Tibial artery (tissue), 4 donors: ENCODE measurements at regions of chr1 and their contacts with region 1.

Region 1: DNA sequence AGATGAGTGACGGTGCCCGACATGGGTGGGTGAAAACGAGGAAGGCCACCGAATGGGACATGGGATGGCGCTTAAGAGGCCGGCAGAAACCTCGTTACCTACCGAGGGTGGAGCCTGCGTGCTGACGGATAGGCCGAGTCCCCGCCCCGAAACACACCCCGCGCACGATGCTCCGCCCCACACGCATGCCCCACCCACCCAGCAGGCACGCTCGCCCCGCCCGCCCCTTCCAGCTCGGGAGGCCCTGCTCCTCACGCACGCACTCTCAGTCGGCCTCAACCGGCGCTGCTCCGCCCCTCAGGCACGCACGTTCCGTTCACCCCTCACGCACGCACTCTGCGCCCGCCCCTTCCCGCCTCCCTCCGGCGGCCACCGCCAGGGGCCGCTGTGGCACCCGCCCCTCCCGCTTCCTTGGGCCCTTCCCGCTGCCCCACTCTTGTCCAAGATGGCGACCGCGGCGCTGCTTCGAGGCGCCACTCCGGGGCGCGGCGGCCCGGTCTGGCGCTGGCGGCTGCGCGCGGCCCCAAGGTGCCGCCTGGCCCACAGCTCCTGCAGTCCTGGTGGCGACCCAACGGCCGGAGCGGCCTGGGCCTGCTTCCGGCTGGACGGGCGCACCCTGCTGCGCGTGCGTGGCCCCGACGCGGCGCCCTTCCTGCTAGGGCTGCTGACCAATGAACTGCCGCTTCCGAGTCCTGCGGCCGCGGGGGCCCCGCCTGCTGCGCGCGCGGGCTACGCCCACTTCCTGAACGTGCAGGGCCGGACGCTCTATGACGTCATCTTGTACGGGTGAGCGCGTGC is at the start of gene IBA57:
- DNase-seq: peak; percentile 99 to 100
- H3K4me3 ChIP-seq: peak within 1 kb of the TSS; percentile 70 to 86
- H3K27ac ChIP-seq: peak within 1 kb of the TSS; percentile 91 to 99
- H3K4me1 ChIP-seq: peaks cover 0 to 21% (median 11%) of the 10 kb centered on the region in 4 donors
- H3K27me3 ChIP-seq: peaks cover 0 to 20% of the 10 kb centered on the region in 2 donors
- CTCF ChIP-seq: peak; percentile 92 to 95

Region 2: DNA sequence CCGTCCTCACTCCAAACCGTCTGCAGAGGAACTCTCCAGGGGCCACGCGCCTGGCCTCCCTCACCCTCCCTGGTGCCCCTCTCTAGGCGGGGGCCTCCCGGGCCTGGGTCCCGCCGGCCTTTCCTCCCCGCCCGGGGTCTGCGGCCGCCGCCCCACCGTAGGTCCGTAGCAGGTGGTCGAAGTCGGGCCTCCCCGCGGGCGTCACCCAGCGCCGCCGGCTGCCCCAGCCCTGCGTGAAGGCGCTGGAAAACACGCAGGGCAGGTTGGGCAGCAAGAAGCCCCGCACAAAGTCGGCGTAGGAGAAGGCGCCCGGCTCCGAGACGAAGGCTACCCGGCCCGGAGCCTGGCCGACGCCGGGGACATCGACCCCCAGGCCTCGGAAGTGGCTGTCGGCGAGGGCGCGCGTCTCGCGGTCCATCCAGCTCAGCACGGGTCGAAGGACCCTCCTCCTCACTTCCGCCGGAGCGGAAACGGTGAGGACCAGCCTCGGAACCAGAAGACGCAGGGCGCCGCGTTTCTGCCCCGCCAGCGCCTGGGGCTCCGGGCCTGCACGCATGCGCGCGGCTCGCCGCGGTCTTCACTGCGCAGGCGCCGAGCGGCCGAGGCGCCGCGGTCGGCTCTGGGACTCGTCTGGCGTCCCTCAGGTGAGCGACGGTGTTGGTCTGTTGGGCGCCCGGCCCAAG is 430.6 kb before region 1 on chr1 and contains the starts of genes JMJD4 and SNAP47:
- intact Hi-C with region 1: loop called (anchors 10 kb)
- DNase-seq: peak; percentile 89 to 94
- H3K4me3 ChIP-seq: peak within 1 kb of the TSS; percentile 80 to 83
- H3K27ac ChIP-seq: peak within 1 kb of the TSS; percentile 87 to 88
- H3K4me1 ChIP-seq: peaks cover 0 to 42% (median 34%) of the 10 kb centered on the region in 4 donors
- H3K27me3 ChIP-seq: no peaks in the 10 kb centered on the region
- CTCF ChIP-seq: no peak

Region 3: DNA sequence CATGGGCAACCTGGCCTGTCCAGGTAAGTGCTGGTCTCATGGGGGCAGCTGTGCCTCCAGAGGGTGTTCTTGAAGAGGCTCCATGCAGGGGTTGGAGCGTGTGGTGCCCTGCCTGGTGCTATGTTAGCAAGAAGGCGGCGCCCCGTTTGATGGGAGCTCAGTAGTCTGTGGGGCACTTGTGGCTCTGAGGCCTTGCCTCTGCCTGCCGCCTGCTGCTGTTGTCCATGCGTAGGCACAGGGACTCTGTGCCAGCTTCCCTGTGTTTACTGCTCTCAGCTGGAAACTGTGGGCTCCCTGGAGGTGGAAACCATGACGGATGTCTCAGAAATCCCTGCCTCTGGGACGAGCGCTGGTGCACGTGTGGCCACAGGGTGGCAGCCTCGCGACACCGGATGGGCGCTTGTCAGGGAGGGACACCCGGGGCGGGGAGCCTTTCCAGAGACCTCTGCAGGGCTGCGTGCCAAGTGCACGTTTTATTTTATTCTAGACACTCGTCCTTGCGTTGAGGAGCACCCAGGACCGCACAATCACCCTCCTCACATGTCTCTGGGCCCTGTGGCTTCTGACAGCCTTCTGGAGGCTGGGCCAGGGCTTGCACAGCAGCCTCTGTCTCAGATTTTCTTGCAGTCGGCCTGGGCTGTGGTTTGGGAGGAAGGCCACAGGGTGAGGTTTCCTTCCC is 403.2 kb before region 1 on chr1:
- intact Hi-C with region 1: no loop called
- DNase-seq: peak; percentile 72 to 85
- H3K4me3 ChIP-seq: no peak overlapping the region
- H3K27ac ChIP-seq: no peak overlapping the region
- H3K4me1 ChIP-seq: peaks cover 0 to 16% (median 6%) of the 10 kb centered on the region in 4 donors
- H3K27me3 ChIP-seq: no peaks in the 10 kb centered on the region
- CTCF ChIP-seq: peak; percentile 69 to 82

Region 4: DNA sequence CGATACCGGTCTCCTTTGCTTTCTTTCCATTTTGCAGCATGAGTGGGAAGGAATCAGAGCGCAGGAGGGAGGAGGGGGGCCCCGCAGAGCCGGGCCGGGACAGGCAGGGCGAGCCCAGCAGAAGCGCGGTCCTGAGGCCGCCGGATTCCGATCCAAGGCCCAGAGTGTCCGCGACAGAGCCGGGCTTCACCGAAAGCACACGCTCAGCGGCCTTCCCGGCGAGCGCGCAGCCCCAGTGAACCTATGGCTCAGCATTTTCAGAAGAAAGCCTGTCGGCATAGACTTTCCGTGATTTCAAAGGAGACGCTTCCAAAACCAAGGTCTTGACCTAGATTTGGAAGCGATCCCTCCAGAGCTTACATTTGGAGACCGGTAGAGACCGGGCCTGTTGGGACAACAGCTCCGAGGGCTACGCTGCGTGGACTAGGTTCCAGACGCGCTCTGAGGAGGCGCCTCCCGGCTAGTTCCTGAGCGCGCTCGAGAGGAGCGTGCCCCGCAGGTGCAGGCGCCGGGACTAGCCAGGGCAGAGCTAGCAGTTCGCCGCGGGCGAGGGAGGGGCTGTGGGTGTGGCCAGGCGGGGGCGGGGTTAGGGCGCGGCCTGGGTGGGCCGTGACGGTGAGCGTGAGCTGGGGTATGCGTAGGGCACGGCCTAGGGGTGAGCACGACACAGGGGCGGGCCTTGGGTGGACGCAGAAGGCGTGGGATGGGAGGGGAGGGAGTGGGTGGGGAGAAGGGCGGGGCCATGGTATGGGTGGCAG is 377.9 kb before region 1 on chr1:
- intact Hi-C with region 1: loop called (anchors 5 kb)
- DNase-seq: peak; percentile 92 to 95
- H3K4me3 ChIP-seq: peak overlapping the region; percentile 62 to 78
- H3K27ac ChIP-seq: peak overlapping the region; percentile 73 to 75
- H3K4me1 ChIP-seq: peaks cover 0 to 25% (median 21%) of the 10 kb centered on the region in 4 donors
- H3K27me3 ChIP-seq: no peaks in the 10 kb centered on the region
- CTCF ChIP-seq: no peak

Region 5: DNA sequence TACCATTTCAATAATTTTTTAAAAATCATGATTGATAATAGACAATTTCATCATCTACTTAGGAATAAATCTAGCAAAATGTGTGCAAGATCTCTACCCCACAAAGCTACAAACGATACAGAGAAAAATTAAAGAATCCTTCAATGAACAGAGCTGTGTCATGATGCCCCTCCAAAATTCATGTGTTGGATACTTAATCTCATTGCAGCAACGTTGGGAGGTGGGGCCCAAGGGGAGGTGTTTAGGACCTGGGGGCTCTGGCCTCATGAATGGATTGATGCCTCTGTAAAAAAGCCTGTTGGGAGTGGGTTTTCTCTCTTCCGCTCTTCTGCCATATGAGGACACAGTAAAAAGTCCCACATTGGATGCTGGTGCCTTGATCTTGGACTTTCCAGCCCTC is 295.2 kb before region 1 on chr1:
- intact Hi-C with region 1: no loop called
- DNase-seq: no peak
- H3K4me3 ChIP-seq: no peak overlapping the region
- H3K27ac ChIP-seq: no peak overlapping the region
- H3K4me1 ChIP-seq: peaks cover 0 to 4% (median 0%) of the 10 kb centered on the region in 4 donors
- H3K27me3 ChIP-seq: peaks cover 0 to 5% of the 10 kb centered on the region in 2 donors
- CTCF ChIP-seq: no peak

Region 6: DNA sequence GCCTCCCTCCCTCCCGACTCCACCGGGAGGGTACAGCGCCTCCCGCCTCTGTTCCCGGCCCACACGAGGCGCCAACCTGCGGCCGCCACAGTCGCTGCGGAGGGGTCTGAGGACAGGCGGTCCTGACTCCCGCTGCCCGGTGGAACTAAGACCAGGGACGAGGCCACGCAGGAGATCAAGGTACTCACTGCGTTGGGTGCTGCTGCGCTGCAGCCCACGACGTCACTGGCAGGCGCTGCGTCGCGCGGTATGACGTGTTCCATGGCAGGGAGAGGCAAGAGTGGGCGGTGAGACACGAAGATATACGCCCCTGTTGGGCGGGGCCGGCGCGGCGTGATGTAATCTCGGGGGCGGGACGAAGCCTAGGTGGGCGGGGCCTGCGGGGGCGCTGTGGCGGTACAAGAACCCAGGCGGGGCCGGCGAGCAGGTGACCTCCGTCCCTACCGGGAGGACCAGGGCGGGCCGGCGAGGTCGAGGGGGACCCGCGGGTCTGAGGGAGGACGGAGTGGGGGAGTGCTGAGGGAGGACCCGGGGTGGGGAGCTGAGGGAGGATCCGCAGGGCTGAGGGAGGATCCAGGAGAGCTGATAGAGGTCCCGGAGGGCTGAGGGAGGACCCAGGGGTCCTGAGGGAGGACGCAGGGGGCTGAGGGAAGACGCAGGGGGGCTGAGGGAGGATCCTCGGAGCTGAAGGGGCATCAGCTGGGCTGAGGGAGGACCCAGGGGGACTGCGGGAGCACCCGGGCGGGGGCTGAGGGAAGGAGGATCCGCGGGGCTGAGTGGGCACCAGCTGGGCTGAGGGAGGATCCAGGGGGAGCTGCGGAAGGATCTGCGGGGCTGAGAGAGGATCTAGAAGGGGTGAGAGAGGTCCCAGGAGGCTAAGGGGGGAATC is 56.3 kb before region 1 on chr1 and contains the start of gene MRPL55:
- intact Hi-C with region 1: loop called (anchors 10 kb)
- DNase-seq: peak; percentile 97 to 99
- H3K4me3 ChIP-seq: peak within 1 kb of the TSS; percentile 68 to 81
- H3K27ac ChIP-seq: peak within 1 kb of the TSS; percentile 92 to 95
- H3K4me1 ChIP-seq: peaks cover 0 to 23% (median 19%) of the 10 kb centered on the region in 4 donors
- H3K27me3 ChIP-seq: no peaks in the 10 kb centered on the region
- CTCF ChIP-seq: peak in 1 of 2 experiments; percentile 13

Region 7: GRCh38 chr1:228139944-228140656 is 25.5 kb before region 1 on chr1 and contains the start of gene GUK1:
- intact Hi-C with region 1: loop called (anchors 2 kb)
- DNase-seq: peak; percentile 100
- H3K4me3 ChIP-seq: peak within 1 kb of the TSS; percentile 98
- H3K27ac ChIP-seq: peak within 1 kb of the TSS; percentile 97 to 99
- H3K4me1 ChIP-seq: peaks cover 0 to 45% (median 37%) of the 10 kb centered on the region in 4 donors
- H3K27me3 ChIP-seq: peaks cover 0 to under 1% of the 10 kb centered on the region in 2 donors
- CTCF ChIP-seq: peak; percentile 32 to 45